Heart right ventricle (tissue), 16 donors: ENCODE measurements at regions of chr19 and their contacts with region 1.

Region 1: GRCh38 chr19:35269421-35270117 is 807 bp downstream of the USF2 start:
- DNase-seq: peak; percentile 87 to 88
- ATAC-seq: peak; percentile 47 to 65 (median 52)
- H3K4me3 ChIP-seq: peak overlapping the region; percentile 37 to 99 (median 83)
- H3K27ac ChIP-seq: peak overlapping the region; percentile 83 to 100 (median 96)
- H3K4me1 ChIP-seq: peaks cover 13 to 62% (median 38%) of the 10 kb centered on the region in 9 donors
- H3K27me3 ChIP-seq: no peaks in the 10 kb centered on the region
- CTCF ChIP-seq: peak; percentile 74 to 91 (median 81)

Region 2: DNA sequence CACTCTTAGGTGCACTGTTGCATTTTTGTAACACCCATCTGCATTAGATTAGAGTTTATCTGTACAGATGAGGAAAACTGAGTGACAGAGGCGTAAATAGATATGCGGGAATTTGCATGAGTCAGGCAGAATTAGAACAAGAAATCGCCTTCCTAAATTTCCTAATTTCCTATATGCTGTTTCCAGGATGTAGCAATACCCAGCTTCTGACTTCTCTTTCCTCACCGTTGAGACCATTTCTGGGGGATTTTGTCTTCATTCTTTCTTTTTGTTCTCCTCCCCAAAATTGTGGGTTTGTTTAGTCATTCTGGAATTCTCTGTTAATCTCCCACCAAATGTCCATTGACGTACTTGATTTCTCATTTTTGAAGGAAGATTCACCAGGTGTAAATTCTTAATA is 294.9 kb before region 1 on chr19:
- intact Hi-C with region 1: loop called in 1 of 10 experiments (anchors 10 kb)
- DNase-seq: no peak
- ATAC-seq: no peak
- H3K4me3 ChIP-seq: no peak overlapping the region
- H3K27ac ChIP-seq: peak overlapping the region in 1 of 10 donors; percentile 71
- H3K4me1 ChIP-seq: peaks cover 0 to 32% (median 0%) of the 10 kb centered on the region in 9 donors
- H3K27me3 ChIP-seq: no peaks in the 10 kb centered on the region
- CTCF ChIP-seq: no peak

Region 3: DNA sequence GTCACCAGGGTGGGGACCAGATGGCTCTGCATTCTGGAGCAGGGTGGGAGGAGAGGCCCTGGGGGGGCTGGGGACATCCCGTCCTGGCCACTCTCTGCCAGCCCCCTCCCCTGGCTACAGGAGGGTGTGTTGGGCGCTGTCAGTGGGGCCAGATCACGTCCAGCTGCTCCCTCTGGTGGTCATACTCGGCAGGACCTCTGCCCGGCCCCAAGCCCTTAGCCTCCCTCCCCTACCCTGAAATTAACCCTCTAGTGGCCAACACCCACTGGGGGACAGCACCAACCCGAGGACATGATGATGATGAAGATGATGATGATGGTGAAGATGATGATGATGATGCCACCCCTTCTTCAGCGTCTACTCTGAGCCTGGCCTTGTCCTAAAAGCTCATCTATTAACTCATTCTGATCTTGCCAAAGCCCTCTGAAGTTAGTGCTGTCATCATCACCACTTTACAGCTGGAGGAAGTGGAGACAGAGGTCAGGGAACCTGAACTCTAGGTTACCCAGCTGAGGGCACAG is 134.1 kb before region 1 on chr19:
- intact Hi-C with region 1: loop called in 6 of 10 experiments (anchors 5 kb)
- DNase-seq: peak; percentile 80 to 85
- ATAC-seq: peak; percentile 48 to 65 (median 55)
- H3K4me3 ChIP-seq: peak overlapping the region in 9 of 10 donors; percentile 12 to 48 (median 33)
- H3K27ac ChIP-seq: peak overlapping the region; percentile 17 to 80 (median 68)
- H3K4me1 ChIP-seq: peaks cover 6 to 48% (median 29%) of the 10 kb centered on the region in 9 donors
- H3K27me3 ChIP-seq: peaks cover 0 to 7% (median 0%) of the 10 kb centered on the region in 7 donors
- CTCF ChIP-seq: peak; percentile 77 to 99 (median 94)

Region 4: DNA sequence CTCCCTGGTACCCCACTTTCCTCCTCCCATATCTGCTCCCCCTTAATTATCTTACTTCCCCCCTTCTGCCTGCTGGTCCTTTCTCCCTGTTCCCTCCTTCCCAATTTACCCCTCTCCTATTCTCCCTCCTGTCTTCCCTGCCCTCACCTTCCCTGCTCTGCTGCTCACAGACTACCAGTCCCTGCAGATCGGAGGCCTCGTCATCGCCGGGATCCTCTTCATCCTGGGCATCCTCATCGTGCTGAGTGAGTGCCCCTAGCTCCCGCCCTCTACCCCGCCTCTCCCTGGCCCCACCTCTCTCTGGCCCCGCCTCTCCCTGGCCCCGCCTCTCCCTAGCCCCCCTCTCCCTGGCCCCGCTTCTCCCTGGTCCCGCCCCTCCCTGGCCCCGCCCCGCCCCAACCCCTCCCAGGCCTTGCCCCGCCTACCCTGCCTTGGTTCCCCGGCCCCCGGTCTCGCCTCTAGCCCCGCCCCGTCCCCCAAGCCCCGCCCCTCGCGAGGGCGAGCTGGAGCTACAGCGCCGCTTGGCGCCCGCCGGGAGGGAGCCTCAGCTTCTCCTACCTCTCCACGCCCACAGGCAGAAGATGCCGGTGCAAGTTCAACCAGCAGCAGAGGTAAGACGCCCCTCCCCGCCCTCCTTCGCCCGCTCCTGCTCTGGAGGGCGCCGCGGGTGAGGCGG is 128.5 kb before region 1 on chr19:
- intact Hi-C with region 1: loop called in 7 of 10 experiments (anchors 2 to 5 kb)
- DNase-seq: peak; percentile 89 to 97
- ATAC-seq: peak; percentile 46 to 80 (median 64)
- H3K4me3 ChIP-seq: peak overlapping the region in 9 of 10 donors; percentile 26 to 63 (median 56)
- H3K27ac ChIP-seq: peak overlapping the region in 8 of 10 donors; percentile 87 to 99 (median 94)
- H3K4me1 ChIP-seq: peaks cover 3 to 71% (median 48%) of the 10 kb centered on the region in 9 donors
- H3K27me3 ChIP-seq: peaks cover 0 to 35% (median 4%) of the 10 kb centered on the region in 7 donors
- CTCF ChIP-seq: peak in 7 of 9 donors; percentile 29 to 59 (median 46)

Region 5: GRCh38 chr19:35154525-35155406 is 114.8 kb before region 1 on chr19 and contains the start of gene FXYD5:
- intact Hi-C with region 1: loop called in 1 of 10 experiments (anchors 5 kb)
- DNase-seq: peak; percentile 74 to 78
- ATAC-seq: peak; percentile 86 to 96 (median 92)
- H3K4me3 ChIP-seq: peak within 1 kb of the TSS; percentile 40 to 88 (median 68)
- H3K27ac ChIP-seq: peak within 1 kb of the TSS in 9 of 10 donors; percentile 14 to 96 (median 80)
- H3K4me1 ChIP-seq: peaks cover 0 to 38% (median 24%) of the 10 kb centered on the region in 9 donors
- H3K27me3 ChIP-seq: peaks cover 0 to 31% (median 17%) of the 10 kb centered on the region in 7 donors
- CTCF ChIP-seq: peak in 2 of 9 donors; percentile 12 to 19
- total RNA-seq, gene FXYD5: 13.9 to 36.6 (median 18.1) TPM

Region 6: GRCh38 chr19:35495107-35496064 is 225.8 kb after region 1 on chr19:
- intact Hi-C with region 1: loop called in 1 of 10 experiments (anchors 10 kb)
- DNase-seq: peak; percentile 57 to 65
- ATAC-seq: peak; percentile 77 to 93 (median 89)
- H3K4me3 ChIP-seq: no peak overlapping the region
- H3K27ac ChIP-seq: no peak overlapping the region
- H3K4me1 ChIP-seq: peaks cover 0 to 8% (median 3%) of the 10 kb centered on the region in 9 donors
- H3K27me3 ChIP-seq: peaks cover 0 to 11% (median 8%) of the 10 kb centered on the region in 7 donors
- CTCF ChIP-seq: peak; percentile 93 to 99 (median 98)